ENCODE measurements at regions of chr10 and their contacts with region 1.

Region 1: DNA sequence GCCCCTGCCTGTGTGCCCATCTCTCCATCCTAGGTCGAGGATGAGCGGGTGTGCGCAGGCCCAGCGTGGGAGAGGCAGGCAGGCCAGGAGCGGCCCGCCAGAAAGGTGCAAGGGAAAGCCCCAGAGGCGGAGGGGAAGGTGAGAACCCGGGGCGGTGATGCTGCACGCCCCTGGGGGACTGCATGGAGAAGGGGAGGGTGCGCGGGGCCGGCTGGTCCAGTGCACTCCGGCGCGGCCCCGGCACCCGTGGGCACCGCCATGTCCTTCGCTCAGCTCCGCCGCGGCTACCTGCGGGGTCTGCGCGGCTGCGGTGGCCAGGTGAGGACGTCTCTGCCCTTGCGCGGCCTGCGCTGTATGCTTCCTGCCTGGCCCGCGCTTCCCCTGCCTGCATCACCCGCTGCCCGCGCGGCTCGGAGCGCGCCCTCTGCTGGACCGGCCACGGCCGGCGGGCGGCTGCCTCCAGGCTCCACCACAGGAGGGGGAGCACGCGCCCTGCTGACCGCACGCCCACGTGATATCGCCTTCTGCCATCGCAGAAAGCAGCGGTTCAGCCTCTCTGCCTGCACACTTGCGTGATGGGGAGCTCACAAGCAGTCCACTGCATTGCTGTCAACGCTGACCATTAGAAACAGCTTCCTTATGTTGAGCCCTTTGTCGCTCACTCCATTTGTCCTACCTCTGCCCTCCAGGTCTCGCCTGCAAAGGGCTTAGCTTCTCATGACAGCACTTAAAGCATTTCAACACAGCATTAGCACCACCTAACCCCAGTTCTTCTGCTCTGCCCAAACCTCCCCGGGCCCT is 73.9 kb downstream of the CXCL12 start:
- DNase-seq: peak; percentile 86 to 91
- H3K4me3 ChIP-seq: peak overlapping the region in 1 of 2 donors; percentile 31
- H3K27ac ChIP-seq: peak overlapping the region; percentile 44 to 48
- H3K4me1 ChIP-seq: peaks cover 0 to 4% of the 10 kb centered on the region in 2 donors
- H3K27me3 ChIP-seq: no peaks in the 10 kb centered on the region
- CTCF ChIP-seq: peak; percentile 91 to 99 (median 96)
- POLR2A ChIP-seq: peak in 1 of 2 donors; percentile 31

Region 2: GRCh38 chr10:43689955-43690771 is 620.8 kb before region 1 on chr10:
- intact Hi-C with region 1: loop called (anchors 10 kb)
- DNase-seq: peak; percentile 78 to 90
- H3K4me3 ChIP-seq: peak overlapping the region; percentile 41 to 55
- H3K27ac ChIP-seq: peak overlapping the region; percentile 76 to 78
- H3K4me1 ChIP-seq: no peaks in the 10 kb centered on the region
- H3K27me3 ChIP-seq: no peaks in the 10 kb centered on the region
- CTCF ChIP-seq: peak; percentile 74 to 96 (median 90)
- POLR2A ChIP-seq: peak; percentile 17 to 25

Measured in uterus (tissue), 4 donors.